ENCODE measurements at regions of chr2 and their contacts with region 1.

Region 1: GRCh38 chr2:178478439-178479274 is at the start of gene FKBP7:
- DNase-seq: peak; percentile 87
- H3K4me3 Mint-ChIP-seq: peak within 1 kb of the TSS; percentile 97
- H3K27ac Mint-ChIP-seq: peak within 1 kb of the TSS; percentile 97
- H3K4me1 Mint-ChIP-seq: peaks cover 33% of the 10 kb centered on the region
- H3K27me3 Mint-ChIP-seq: no peaks in the 10 kb centered on the region
- total RNA-seq, gene FKBP7: 2.8 to 2.9 TPM

Region 2: GRCh38 chr2:178450774-178451525 is 27.7 kb before region 1 on chr2 and contains the starts of genes PJVK and PRKRA:
- CTCF ChIA-PET with region 1: interaction called, 7 read pairs
- POLR2A ChIA-PET with region 1: interaction called, 12 read pairs
- intact Hi-C with region 1: loop called (anchors 1 kb)
- DNase-seq: peak; percentile 97
- H3K4me3 Mint-ChIP-seq: peak within 1 kb of the TSS; percentile 89
- H3K27ac Mint-ChIP-seq: peak within 1 kb of the TSS; percentile 95
- H3K4me1 Mint-ChIP-seq: peaks cover 24% of the 10 kb centered on the region
- H3K27me3 Mint-ChIP-seq: no peaks in the 10 kb centered on the region
- total RNA-seq, gene PJVK: 2.3 to 3.0 TPM
- total RNA-seq, gene PRKRA: 56.3 to 60.3 TPM

Region 3: DNA sequence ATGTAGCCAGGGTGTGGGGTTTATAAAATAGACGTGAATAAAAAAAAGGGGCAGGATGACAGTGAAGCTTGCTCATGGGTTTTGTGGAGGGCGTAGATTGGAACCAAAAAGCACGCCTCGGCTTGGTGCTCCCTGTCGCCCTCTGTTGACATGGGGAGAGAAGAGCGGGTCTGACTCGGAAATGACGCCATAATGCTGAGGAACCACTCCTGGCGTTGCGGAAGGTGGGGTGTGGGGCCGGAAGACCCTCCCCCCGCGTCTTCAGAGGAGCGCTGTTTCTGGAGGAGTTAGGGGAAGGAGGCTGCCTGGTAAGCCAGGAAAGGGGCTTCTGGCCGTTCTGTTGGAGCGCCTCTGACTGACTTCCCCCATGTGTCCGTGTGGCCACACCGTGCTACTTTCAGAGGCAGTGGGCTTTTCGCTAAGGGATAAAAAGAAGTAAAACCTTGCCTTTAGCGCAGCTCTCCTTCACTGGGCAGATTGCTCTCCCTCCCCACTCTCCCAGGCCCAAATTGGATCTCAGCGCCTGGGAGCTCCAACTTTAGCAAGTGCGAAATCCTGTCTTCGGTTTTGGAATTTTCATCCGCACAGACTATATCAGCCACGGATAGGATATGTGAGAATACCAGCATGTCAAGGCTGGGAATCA is 44.4 kb after region 1 on chr2:
- CTCF ChIA-PET with region 1: interaction called, 10 read pairs
- POLR2A ChIA-PET with region 1: no interaction called
- intact Hi-C with region 1: loop called (anchors 1 kb)
- DNase-seq: peak; percentile 92
- H3K4me3 Mint-ChIP-seq: peak overlapping the region; percentile 95
- H3K27ac Mint-ChIP-seq: peak overlapping the region; percentile 91
- H3K4me1 Mint-ChIP-seq: peaks cover 54% of the 10 kb centered on the region
- H3K27me3 Mint-ChIP-seq: no peaks in the 10 kb centered on the region

Region 4: GRCh38 chr2:178700922-178701342 is 222.3 kb after region 1 on chr2:
- CTCF ChIA-PET with region 1: no interaction called
- POLR2A ChIA-PET with region 1: no interaction called
- intact Hi-C with region 1: loop called (anchors 2 kb)
- DNase-seq: no peak
- H3K4me3 Mint-ChIP-seq: no peak overlapping the region
- H3K27ac Mint-ChIP-seq: no peak overlapping the region
- H3K4me1 Mint-ChIP-seq: no peaks in the 10 kb centered on the region
- H3K27me3 Mint-ChIP-seq: peaks cover 3% of the 10 kb centered on the region

Region 5: GRCh38 chr2:178891265-178891958 is 412.8 kb after region 1 on chr2:
- CTCF ChIA-PET with region 1: no interaction called
- POLR2A ChIA-PET with region 1: no interaction called
- intact Hi-C with region 1: loop called (anchors 10 kb)
- DNase-seq: peak; percentile 61
- H3K4me3 Mint-ChIP-seq: no peak overlapping the region
- H3K27ac Mint-ChIP-seq: no peak overlapping the region
- H3K4me1 Mint-ChIP-seq: no peaks in the 10 kb centered on the region
- H3K27me3 Mint-ChIP-seq: no peaks in the 10 kb centered on the region

Measured in activated CD4-positive, alpha-beta memory T cell treated with anti-CD3 and anti-CD28 coated beads for 36 hours (primary cell).